GM12878 (cell line): ENCODE measurements at regions of chr22 and their contacts with region 1.

Region 1: GRCh38 chr22:38181453-38182247 is at the start of gene PLA2G6:
- DNase-seq: peak; percentile 95
- ATAC-seq: peak; percentile 85
- H3K4me3 ChIP-seq: peak within 1 kb of the TSS; percentile 89
- H3K27ac ChIP-seq: peak within 1 kb of the TSS; percentile 100
- H3K4me1 ChIP-seq: peaks cover 39% of the 10 kb centered on the region
- H3K27me3 ChIP-seq: no peaks in the 10 kb centered on the region
- CTCF ChIP-seq: no peak
- EP300 ChIP-seq: no peak
- POLR2A ChIP-seq: peak; percentile 49; the same call in 1 of the 2 replicates
- RAD21 ChIP-seq: no peak
- polyA plus RNA-seq, gene PLA2G6: 0.15 to 0.27 TPM

Region 2: GRCh38 chr22:38034274-38034882 is 147.3 kb before region 1 on chr22:
- CTCF ChIA-PET with region 1: no interaction called
- POLR2A ChIA-PET with region 1: no interaction called
- RAD21 ChIA-PET with region 1: no interaction called
- SMC1A ChIA-PET with region 1: no interaction called
- in situ Hi-C with region 1: no loop called
- intact Hi-C with region 1: no loop called
- DNase-seq: peak; percentile 15
- ATAC-seq: peak; percentile 83
- H3K4me3 ChIP-seq: no peak overlapping the region
- H3K27ac ChIP-seq: no peak overlapping the region
- H3K4me1 ChIP-seq: peaks cover 7% of the 10 kb centered on the region; the same call in 1 of the 2 replicates
- H3K27me3 ChIP-seq: no peaks in the 10 kb centered on the region; a peak in 1 of 4 replicates
- CTCF ChIP-seq: no peak
- EP300 ChIP-seq: no peak
- POLR2A ChIP-seq: no peak
- RAD21 ChIP-seq: no peak

Region 3: GRCh38 chr22:38163844-38164550 is 17.7 kb before region 1 on chr22:
- CTCF ChIA-PET with region 1: interaction called, 4 read pairs
- POLR2A ChIA-PET with region 1: interaction called, 8 read pairs
- RAD21 ChIA-PET with region 1: interaction called, 3 read pairs
- SMC1A ChIA-PET with region 1: interaction called, 6 read pairs
- in situ Hi-C with region 1: no loop called
- intact Hi-C with region 1: loop called (anchors 2 kb)
- DNase-seq: no peak
- ATAC-seq: no peak
- H3K4me3 ChIP-seq: no peak overlapping the region
- H3K27ac ChIP-seq: no peak overlapping the region
- H3K4me1 ChIP-seq: peaks cover 20% of the 10 kb centered on the region
- H3K27me3 ChIP-seq: no peaks in the 10 kb centered on the region
- CTCF ChIP-seq: no peak
- EP300 ChIP-seq: no peak
- POLR2A ChIP-seq: no peak
- RAD21 ChIP-seq: no peak

Region 4: DNA sequence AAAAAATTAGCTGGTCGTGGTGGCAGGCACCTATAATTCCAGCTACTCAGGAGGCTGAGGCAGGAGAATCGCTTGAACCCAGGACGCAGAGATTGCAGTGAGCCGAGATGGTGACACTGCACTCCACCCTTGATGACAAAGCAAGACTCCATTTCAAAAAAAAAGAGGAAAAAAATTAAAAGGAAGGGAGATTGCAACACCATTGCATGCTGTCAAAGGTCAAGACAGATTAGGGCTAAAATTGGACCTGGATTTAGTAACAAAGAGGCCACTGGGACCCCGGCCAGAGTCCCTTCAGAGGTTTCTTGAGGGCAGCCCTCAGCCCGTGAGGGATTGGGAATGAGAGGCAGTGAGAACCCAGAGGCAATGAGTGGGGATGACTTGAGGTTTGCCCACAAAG is 11.9 kb after region 1 on chr22:
- CTCF ChIA-PET with region 1: interaction called, 8 read pairs
- POLR2A ChIA-PET with region 1: interaction called, 13 read pairs
- RAD21 ChIA-PET with region 1: interaction called, 9 read pairs
- SMC1A ChIA-PET with region 1: interaction called, 4 read pairs
- in situ Hi-C with region 1: no loop called
- intact Hi-C with region 1: no loop called
- DNase-seq: no peak
- ATAC-seq: no peak
- H3K4me3 ChIP-seq: no peak overlapping the region
- H3K27ac ChIP-seq: no peak overlapping the region
- H3K4me1 ChIP-seq: peaks cover 9% of the 10 kb centered on the region
- H3K27me3 ChIP-seq: no peaks in the 10 kb centered on the region
- CTCF ChIP-seq: no peak
- EP300 ChIP-seq: no peak
- POLR2A ChIP-seq: no peak
- RAD21 ChIP-seq: no peak